Tibial artery (tissue), 4 donors: ENCODE measurements at regions of chr10 and their contacts with region 1.

Region 1: GRCh38 chr10:59372543-59372942 is 10.2 kb upstream of the FAM13C start:
- DNase-seq: no peak
- H3K4me3 ChIP-seq: no peak overlapping the region
- H3K27ac ChIP-seq: peak overlapping the region; percentile 44 to 48
- H3K4me1 ChIP-seq: peaks cover 0 to 42% (median 10%) of the 10 kb centered on the region in 4 donors
- H3K27me3 ChIP-seq: no peaks in the 10 kb centered on the region
- CTCF ChIP-seq: no peak

Region 2: GRCh38 chr10:59310324-59310914 is 62.1 kb before region 1 on chr10:
- intact Hi-C with region 1: no loop called
- DNase-seq: no peak
- H3K4me3 ChIP-seq: no peak overlapping the region
- H3K27ac ChIP-seq: peak overlapping the region; percentile 62 to 64
- H3K4me1 ChIP-seq: peaks cover 0 to 61% (median 29%) of the 10 kb centered on the region in 4 donors
- H3K27me3 ChIP-seq: no peaks in the 10 kb centered on the region
- CTCF ChIP-seq: no peak

Region 3: DNA sequence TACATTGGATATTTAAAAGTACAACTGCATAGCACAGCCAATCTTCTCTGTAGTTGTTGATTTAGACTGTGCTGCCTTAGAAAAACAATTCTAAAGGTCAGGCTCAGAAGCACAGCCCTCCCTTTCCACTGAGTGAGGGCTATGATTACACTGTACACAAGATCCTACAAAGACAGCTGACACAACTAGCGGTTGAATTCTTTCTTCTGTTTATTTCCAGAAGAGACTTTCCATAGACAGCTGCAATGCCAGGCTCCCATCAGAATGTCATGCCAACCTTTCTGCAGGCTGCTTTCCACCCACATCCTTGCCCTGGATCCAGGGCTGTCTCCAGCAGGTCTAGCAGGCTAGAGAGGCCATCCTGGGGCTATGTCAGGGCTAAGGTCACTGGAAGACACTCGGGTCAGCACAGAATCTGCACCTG is 49.5 kb before region 1 on chr10:
- intact Hi-C with region 1: loop called (anchors 10 kb)
- DNase-seq: no peak
- H3K4me3 ChIP-seq: no peak overlapping the region
- H3K27ac ChIP-seq: peak overlapping the region; percentile 50 to 69
- H3K4me1 ChIP-seq: peaks cover 0 to 74% (median 18%) of the 10 kb centered on the region in 4 donors
- H3K27me3 ChIP-seq: no peaks in the 10 kb centered on the region
- CTCF ChIP-seq: no peak

Region 4: GRCh38 chr10:59336632-59337031 is 35.9 kb before region 1 on chr10:
- intact Hi-C with region 1: no loop called
- DNase-seq: no peak
- H3K4me3 ChIP-seq: no peak overlapping the region
- H3K27ac ChIP-seq: peak overlapping the region; percentile 62 to 75
- H3K4me1 ChIP-seq: peaks cover 4 to 86% (median 27%) of the 10 kb centered on the region in 4 donors
- H3K27me3 ChIP-seq: no peaks in the 10 kb centered on the region
- CTCF ChIP-seq: no peak

Region 5: GRCh38 chr10:59387951-59388670 is 15.6 kb after region 1 on chr10:
- intact Hi-C with region 1: no loop called
- DNase-seq: peak in 1 of 2 donors; percentile 65
- H3K4me3 ChIP-seq: no peak overlapping the region
- H3K27ac ChIP-seq: peak overlapping the region; percentile 74 to 82
- H3K4me1 ChIP-seq: peaks cover 4 to 43% (median 21%) of the 10 kb centered on the region in 4 donors
- H3K27me3 ChIP-seq: no peaks in the 10 kb centered on the region
- CTCF ChIP-seq: no peak

Region 6: DNA sequence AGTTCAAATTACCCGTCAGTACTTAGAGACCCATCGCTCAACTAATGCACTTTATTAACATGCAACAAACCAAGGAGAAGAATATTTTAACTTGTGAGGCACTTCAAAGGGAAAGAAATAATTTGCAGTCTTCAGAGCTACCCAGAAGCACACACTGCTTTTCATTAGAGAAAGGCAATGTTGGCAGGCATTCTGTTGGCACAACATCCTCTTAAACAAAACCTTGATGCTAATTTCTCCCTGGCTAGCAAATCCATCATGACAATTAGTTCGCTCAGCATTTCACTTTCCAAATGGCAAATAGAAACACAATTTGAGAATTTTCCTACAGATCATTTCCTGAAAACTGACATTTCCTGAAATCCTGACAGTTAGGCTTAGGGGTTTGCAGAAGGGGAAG is 145.5 kb after region 1 on chr10:
- intact Hi-C with region 1: no loop called
- DNase-seq: no peak
- H3K4me3 ChIP-seq: no peak overlapping the region
- H3K27ac ChIP-seq: no peak overlapping the region
- H3K4me1 ChIP-seq: no peaks in the 10 kb centered on the region
- H3K27me3 ChIP-seq: no peaks in the 10 kb centered on the region
- CTCF ChIP-seq: no peak